ENCODE measurements at regions of chr18 and their contacts with region 1.

Region 1: GRCh38 chr18:80034068-80034851 is at the start of gene RBFA:
- DNase-seq: peak; percentile 98
- H3K4me3 ChIP-seq: peak within 1 kb of the TSS; percentile 79
- H3K27ac ChIP-seq: peak within 1 kb of the TSS; percentile 87
- H3K4me1 ChIP-seq: peaks cover 9% of the 10 kb centered on the region
- H3K27me3 ChIP-seq: no peaks in the 10 kb centered on the region
- CTCF ChIP-seq: peak; percentile 36; the same call in 1 of the 2 replicates
- total RNA-seq, gene RBFA: 39.5 and 46.1 TPM in 2 replicates

Region 2: DNA sequence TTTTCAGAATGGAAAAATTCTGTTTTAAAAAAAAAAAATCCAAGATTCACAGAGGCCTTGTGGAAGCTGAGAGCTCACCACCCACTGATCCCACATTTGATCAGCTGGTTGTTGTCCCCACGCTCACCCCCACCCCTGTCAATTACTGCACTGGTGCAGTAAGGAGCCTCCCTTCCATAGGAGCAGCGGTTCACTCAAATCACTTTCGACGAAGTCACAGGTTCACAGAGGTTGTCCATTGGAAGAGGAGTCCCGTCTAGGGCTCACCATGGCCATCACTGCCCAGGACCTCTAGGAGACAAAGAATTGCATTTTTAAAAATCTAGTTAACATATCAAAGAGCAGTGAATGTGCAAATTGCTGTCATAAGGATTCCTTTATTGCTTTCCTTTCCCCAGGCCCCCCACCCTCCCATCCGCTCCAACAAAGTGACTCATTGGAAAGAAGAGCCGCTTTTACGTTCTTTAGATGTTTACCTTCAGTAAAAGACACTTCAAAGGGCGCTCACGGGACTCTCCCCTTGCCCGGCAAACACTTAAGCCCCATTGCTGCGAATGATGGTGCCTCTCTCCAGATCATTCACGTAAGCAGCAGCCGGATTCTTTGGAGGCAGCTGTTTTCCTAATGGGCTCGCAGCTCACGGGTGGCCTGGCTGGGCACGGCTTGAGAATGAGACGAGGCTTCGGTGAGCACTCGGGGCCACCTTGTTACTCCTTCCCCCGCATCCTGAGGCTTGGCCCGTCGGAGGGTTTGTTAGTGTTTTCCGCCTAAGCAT is 1220.1 kb before region 1 on chr18:
- CTCF ChIA-PET with region 1: no interaction called
- POLR2A ChIA-PET with region 1: no interaction called
- intact Hi-C with region 1: no loop called
- DNase-seq: no peak
- H3K4me3 ChIP-seq: no peak overlapping the region
- H3K27ac ChIP-seq: no peak overlapping the region
- H3K4me1 ChIP-seq: no peaks in the 10 kb centered on the region
- H3K27me3 ChIP-seq: peaks cover 31% of the 10 kb centered on the region
- CTCF ChIP-seq: no peak

Region 3: DNA sequence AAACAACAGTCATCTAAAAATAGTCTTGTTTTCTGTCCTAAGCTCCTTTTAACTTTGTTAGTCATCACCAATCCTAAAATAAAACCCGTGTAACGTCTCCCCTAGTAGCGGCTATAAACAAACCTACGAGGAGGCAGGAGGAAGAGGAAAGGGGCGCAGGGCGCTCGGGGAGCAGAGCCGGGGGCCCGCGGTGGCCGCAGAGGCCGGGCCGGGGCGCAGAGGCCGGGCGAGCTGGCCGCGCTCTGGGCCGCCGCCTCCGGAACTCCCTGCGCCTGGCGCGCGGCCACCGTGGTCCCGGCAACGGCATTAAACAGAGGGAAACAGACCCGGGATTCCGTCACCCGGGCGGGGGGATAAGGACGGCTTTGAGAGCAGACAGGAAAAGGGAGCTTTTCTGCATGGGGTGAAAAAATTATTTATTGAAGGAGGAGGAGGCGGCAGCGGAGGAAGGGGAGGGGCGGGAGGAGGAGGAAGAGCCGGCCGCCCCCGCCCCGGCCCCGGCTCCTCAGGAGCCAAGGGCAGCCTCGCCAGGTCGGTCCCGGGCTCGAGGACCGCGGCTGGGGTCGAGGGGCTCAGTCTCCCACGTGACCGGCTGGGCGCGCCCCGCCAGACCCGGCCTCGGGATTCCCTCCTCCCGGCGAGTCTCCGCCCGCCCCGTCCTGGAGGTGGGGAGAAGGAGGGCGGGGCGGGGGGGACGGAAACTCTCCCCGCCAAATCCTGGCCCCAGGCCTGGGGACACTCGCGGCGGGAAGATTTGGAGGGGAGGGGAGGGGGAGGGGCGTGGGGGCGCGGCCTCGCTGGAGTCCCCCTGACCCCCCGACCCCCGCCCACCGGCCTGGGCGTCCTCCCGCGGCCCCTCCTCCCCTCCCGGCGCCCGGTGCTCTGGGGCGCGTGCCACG is 640.4 kb before region 1 on chr18:
- CTCF ChIA-PET with region 1: no interaction called
- POLR2A ChIA-PET with region 1: no interaction called
- intact Hi-C with region 1: loop called (anchors 10 kb)
- DNase-seq: peak; percentile 91
- H3K4me3 ChIP-seq: peak overlapping the region; percentile 53
- H3K27ac ChIP-seq: peak overlapping the region; percentile 58
- H3K4me1 ChIP-seq: peaks cover 16% of the 10 kb centered on the region
- H3K27me3 ChIP-seq: no peaks in the 10 kb centered on the region
- CTCF ChIP-seq: no peak

Region 4: GRCh38 chr18:79740521-79741361 is 293.5 kb before region 1 on chr18:
- CTCF ChIA-PET with region 1: no interaction called
- POLR2A ChIA-PET with region 1: no interaction called
- intact Hi-C with region 1: no loop called
- DNase-seq: no peak
- H3K4me3 ChIP-seq: no peak overlapping the region
- H3K27ac ChIP-seq: no peak overlapping the region
- H3K4me1 ChIP-seq: no peaks in the 10 kb centered on the region
- H3K27me3 ChIP-seq: no peaks in the 10 kb centered on the region
- CTCF ChIP-seq: no peak

Region 5: GRCh38 chr18:79951578-79952455 is 82.4 kb before region 1 on chr18 and contains the start of gene SLC66A2:
- CTCF ChIA-PET with region 1: no interaction called
- POLR2A ChIA-PET with region 1: no interaction called
- intact Hi-C with region 1: loop called (anchors 5 kb)
- DNase-seq: peak; percentile 88
- H3K4me3 ChIP-seq: peak within 1 kb of the TSS; percentile 93
- H3K27ac ChIP-seq: peak within 1 kb of the TSS; percentile 80
- H3K4me1 ChIP-seq: peaks cover 10% of the 10 kb centered on the region
- H3K27me3 ChIP-seq: no peaks in the 10 kb centered on the region
- CTCF ChIP-seq: no peak
- total RNA-seq, gene SLC66A2: 28.0 and 34.9 TPM in 2 replicates

Region 6: DNA sequence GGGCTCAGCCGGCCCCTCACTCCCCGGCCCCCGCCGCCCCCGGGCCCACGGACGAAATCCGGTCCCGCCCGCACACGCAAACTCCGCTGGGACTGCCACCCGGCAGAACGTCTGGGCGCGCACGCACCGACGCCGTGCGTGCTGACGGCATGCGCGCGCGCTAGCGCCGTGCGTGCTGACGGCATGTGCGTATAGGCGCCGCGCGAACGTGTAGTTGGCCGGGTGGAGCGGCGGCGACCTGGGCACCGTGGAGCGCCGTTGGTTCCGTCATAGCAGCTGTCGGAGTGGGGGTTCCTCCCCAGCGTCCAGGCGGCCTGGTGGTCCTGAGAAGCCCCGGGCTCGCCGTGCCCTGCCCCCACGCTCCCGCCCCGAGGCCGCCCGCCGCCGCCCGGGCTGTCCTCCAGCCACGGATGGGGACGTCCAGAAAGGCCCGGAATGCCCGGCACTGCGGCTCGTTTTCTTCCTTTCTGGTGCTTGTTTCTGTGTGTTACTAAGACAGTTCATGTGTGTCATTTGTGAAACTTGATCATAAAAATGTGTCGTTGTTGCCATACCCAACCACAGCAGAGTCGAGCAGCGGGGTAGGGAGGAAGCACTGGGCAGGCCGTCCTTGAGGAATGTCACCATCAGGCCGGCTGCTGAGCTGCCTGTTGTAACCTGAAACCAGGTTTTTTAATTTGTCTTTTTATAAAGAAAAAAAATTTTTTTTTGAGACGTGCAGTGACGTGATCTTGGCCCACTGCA is 45.6 kb before region 1 on chr18 and contains the start of gene TXNL4A:
- CTCF ChIA-PET with region 1: no interaction called
- POLR2A ChIA-PET with region 1: no interaction called
- intact Hi-C with region 1: loop called (anchors 2 kb)
- DNase-seq: peak; percentile 93
- H3K4me3 ChIP-seq: peak within 1 kb of the TSS; percentile 90
- H3K27ac ChIP-seq: peak within 1 kb of the TSS; percentile 94
- H3K4me1 ChIP-seq: peaks cover 11% of the 10 kb centered on the region
- H3K27me3 ChIP-seq: no peaks in the 10 kb centered on the region
- CTCF ChIP-seq: no peak
- total RNA-seq, gene TXNL4A: 201 and 216 TPM in 2 replicates

Region 7: GRCh38 chr18:80086281-80086680 is 52.0 kb after region 1 on chr18:
- CTCF ChIA-PET with region 1: no interaction called
- POLR2A ChIA-PET with region 1: no interaction called
- intact Hi-C with region 1: no loop called
- DNase-seq: no peak
- H3K4me3 ChIP-seq: no peak overlapping the region
- H3K27ac ChIP-seq: no peak overlapping the region
- H3K4me1 ChIP-seq: no peaks in the 10 kb centered on the region
- H3K27me3 ChIP-seq: no peaks in the 10 kb centered on the region
- CTCF ChIP-seq: no peak